ENCODE measurements at regions of chr7 and their contacts with region 1.

Region 1: DNA sequence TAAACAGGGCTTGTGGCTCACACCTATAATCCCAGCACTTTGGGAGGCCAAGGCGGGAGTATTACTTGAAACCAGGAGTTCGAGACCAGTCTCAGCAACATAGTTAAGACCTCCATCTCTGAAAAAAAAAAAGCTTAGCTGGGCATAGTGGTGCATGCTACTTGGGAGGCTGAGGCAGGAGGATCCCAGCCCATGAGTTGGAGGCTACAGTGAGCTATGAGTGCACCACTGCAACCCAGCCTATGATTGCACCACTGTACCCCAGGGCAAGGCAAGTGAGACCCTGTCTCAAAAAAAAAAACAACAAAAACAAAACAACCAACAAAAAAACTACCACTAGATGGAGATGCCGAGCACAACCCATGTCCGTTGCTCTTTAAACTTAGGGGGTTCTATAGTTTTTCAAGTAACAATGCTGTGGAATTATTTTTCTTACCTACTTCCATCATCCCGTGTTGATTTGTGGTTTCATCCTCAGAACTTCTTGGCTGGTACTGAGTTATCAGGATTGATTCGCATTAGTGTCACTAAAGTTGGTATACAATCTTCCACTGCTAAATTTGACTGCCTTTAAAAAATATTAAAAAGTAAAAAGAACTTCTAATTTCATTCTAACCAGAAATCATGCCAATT is 12.2 kb upstream of the REPIN1 start:
- DNase-seq: peak in 4 of 14 experiments; percentile 46 to 78 (median 68)
- ATAC-seq: no peak
- H3K4me3 ChIP-seq: no peak overlapping the region
- H3K4me3 Mint-ChIP-seq: peak overlapping the region; percentile 25
- H3K27ac ChIP-seq: no peak overlapping the region
- H3K27ac Mint-ChIP-seq: peak overlapping the region; percentile 34
- H3K4me1 ChIP-seq: peaks cover 28% of the 10 kb centered on the region
- H3K4me1 Mint-ChIP-seq: peaks cover 37% of the 10 kb centered on the region
- H3K27me3 ChIP-seq: no peaks in the 10 kb centered on the region
- H3K27me3 Mint-ChIP-seq: no peaks in the 10 kb centered on the region
- CTCF ChIP-seq: peak; percentile 75

Region 2: GRCh38 chr7:150368096-150368883 is 11.9 kb after region 1 on chr7 and contains the start of gene REPIN1:
- CTCF ChIA-PET with region 1: interaction called, 7 read pairs
- POLR2A ChIA-PET with region 1: interaction called, 16 read pairs
- intact Hi-C with region 1: loop called in 1 of 2 experiments (anchors 1 kb)
- DNase-seq: peak; percentile 58 to 91 (median 73)
- ATAC-seq: peak; percentile 45
- H3K4me3 ChIP-seq: peak within 1 kb of the TSS; percentile 83
- H3K4me3 Mint-ChIP-seq: peak within 1 kb of the TSS; percentile 99
- H3K27ac ChIP-seq: peak within 1 kb of the TSS; percentile 40 to 80
- H3K27ac Mint-ChIP-seq: peak within 1 kb of the TSS; percentile 96
- H3K4me1 ChIP-seq: peaks cover 47% of the 10 kb centered on the region
- H3K4me1 Mint-ChIP-seq: peaks cover 61% of the 10 kb centered on the region
- H3K27me3 ChIP-seq: no peaks in the 10 kb centered on the region
- H3K27me3 Mint-ChIP-seq: no peaks in the 10 kb centered on the region
- CTCF ChIP-seq: no peak
- total RNA-seq, gene REPIN1: 58.2 to 59.8 TPM

Region 3: DNA sequence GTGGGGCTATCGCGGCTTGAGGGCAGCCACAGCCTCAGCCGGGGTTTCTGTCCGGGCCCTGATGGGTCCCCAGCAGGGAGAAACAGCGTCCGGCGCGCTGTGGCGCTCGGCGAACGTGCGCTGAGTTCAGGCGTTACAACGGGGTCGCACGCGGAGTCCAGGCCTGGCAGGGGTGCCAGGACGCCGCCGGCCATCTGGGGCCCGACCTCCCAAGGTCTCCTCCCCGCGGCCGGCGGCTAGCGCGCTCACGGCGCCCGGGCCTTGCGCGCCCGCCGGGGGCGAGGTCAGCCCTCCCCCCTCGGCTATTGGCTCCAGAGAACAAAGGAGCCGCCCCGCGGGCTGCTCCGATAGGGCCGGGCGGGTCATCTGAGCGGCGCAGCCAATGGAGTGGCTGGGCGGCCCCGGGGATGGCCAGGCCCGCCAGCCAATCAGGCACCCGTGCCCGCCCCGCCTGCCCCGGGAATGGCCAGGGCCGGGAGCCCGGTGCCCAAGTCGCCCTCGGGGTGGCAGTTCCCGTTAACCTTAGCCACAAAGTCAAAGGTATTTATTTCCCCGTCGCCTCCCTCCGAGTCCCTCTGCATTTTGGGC is 22.6 kb after region 1 on chr7 and contains the start of gene ZNF775:
- CTCF ChIA-PET with region 1: interaction called, 9 read pairs
- POLR2A ChIA-PET with region 1: interaction called, 3 read pairs
- intact Hi-C with region 1: loop called (anchors 1 to 2 kb)
- DNase-seq: peak; percentile 80 to 95 (median 90)
- ATAC-seq: peak; percentile 94
- H3K4me3 ChIP-seq: peak within 1 kb of the TSS; percentile 85
- H3K4me3 Mint-ChIP-seq: peak within 1 kb of the TSS; percentile 90
- H3K27ac ChIP-seq: peak within 1 kb of the TSS; percentile 54 to 55
- H3K27ac Mint-ChIP-seq: peak within 1 kb of the TSS; percentile 84
- H3K4me1 ChIP-seq: peaks cover 46% of the 10 kb centered on the region
- H3K4me1 Mint-ChIP-seq: peaks cover 65% of the 10 kb centered on the region
- H3K27me3 ChIP-seq: no peaks in the 10 kb centered on the region
- H3K27me3 Mint-ChIP-seq: no peaks in the 10 kb centered on the region
- CTCF ChIP-seq: no peak
- total RNA-seq, gene ZNF775: 0.38 to 0.45 TPM

Region 4: DNA sequence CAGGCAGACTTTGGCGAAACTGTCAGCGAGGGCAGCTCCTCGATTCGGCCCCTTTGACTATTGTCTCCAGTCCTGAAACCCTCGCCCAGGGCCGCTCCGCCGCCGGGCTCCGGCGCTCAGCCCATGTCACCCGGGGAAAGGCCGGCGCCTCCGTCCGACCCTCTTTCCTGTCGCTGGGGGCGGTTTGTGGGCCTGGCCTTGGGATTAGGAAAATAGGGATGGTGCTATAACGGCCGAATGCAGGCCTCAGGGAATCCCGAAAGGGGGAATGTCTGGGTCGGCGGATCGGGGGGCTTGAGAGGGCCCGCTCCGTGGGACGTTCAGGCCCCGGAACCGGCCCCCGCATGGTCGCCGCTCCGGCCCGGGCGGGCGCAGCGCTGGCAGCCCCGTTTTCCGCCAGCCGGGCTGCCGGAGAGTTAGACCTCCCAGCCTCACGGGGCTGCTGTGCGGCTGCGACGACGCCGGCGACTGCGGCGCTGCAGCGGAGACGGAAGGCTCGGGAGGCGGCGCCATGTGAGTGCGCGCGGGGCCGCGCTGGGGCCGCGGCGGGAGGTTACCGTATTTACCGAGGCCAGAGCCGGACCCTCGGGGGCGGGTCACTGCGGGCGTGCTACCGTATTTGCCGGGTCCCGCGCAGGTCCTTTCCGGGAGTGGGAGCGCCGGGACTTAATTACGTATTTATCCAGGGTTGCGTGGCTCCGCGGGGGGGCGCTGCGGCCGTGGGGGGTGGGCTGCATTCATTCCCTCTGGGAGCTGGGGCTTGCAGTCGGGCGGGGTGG is 48.6 kb after region 1 on chr7:
- CTCF ChIA-PET with region 1: interaction called, 30 read pairs
- POLR2A ChIA-PET with region 1: interaction called, 7 read pairs
- intact Hi-C with region 1: loop called in 1 of 2 experiments (anchors 2 kb)
- DNase-seq: peak; percentile 56 to 92 (median 72)
- ATAC-seq: peak; percentile 82
- H3K4me3 ChIP-seq: peak overlapping the region; percentile 90
- H3K4me3 Mint-ChIP-seq: peak overlapping the region; percentile 94
- H3K27ac ChIP-seq: peak overlapping the region; percentile 88 to 89
- H3K27ac Mint-ChIP-seq: peak overlapping the region; percentile 82
- H3K4me1 ChIP-seq: peaks cover 34% of the 10 kb centered on the region
- H3K4me1 Mint-ChIP-seq: peaks cover 37% of the 10 kb centered on the region
- H3K27me3 ChIP-seq: no peaks in the 10 kb centered on the region
- H3K27me3 Mint-ChIP-seq: no peaks in the 10 kb centered on the region
- CTCF ChIP-seq: no peak

Region 5: DNA sequence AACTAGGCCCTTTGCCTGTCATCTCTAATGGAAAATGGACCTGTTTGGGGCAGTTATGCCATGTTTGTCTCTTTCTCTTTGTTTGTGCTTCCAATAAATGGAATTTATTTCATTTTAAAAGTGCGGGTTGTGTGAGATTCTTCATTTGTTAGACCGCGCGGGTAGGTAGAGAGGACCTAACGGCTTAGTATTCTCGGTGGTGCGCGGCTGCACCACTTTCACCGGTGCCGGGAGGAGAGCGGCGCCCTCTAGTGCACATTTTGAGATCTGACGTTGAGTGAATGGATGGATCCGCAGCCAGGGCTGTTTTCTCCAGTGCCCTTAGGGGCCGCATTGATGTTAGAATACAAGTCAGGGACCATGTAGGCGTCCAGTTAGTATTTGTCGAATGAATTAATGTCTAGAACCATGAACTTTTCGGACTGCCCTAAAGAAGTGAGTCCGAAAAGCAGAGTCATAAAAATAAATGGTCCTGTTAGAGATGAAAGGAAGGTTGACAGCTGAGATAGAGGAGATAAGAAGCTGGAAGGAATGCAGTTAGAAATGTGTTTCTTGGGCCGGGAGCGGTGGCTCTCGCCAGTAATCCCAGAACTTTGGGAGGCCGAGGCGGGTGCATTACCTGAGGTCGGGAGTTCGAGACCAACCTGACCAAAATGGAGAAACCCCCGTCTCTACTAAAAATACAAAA is 64.8 kb after region 1 on chr7:
- CTCF ChIA-PET with region 1: no interaction called
- POLR2A ChIA-PET with region 1: interaction called, 3 read pairs
- intact Hi-C with region 1: loop called (anchors 1 kb)
- DNase-seq: peak; percentile 77 to 94 (median 86)
- ATAC-seq: peak; percentile 99
- H3K4me3 ChIP-seq: no peak overlapping the region
- H3K4me3 Mint-ChIP-seq: peak overlapping the region; percentile 18
- H3K27ac ChIP-seq: no peak overlapping the region
- H3K27ac Mint-ChIP-seq: no peak overlapping the region
- H3K4me1 ChIP-seq: peaks cover 9% of the 10 kb centered on the region
- H3K4me1 Mint-ChIP-seq: peaks cover 7% of the 10 kb centered on the region
- H3K27me3 ChIP-seq: no peaks in the 10 kb centered on the region
- H3K27me3 Mint-ChIP-seq: no peaks in the 10 kb centered on the region
- CTCF ChIP-seq: peak; percentile 95